ENCODE measurements at regions of chr17 and their contacts with region 1.

Region 1: DNA sequence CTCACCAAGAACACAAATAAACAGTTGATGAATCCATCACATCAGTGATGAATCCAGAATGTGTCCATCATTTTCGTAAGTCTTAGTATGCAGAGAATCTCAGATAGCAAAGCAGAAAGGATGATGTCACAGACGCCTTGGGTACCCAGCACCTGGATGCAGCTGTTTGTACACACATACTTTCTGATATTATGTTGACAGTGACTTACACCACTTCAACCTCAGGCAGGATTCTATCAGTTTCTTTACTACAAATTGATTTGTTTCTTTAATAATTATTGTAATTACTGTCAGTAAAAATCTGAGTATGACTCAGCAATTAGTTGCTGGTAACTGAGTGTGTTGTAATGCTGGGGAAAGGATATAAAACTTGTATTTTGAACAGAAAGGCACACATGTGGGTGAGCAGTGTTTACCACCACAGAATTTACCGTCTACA is 159.8 kb downstream of the RPTOR start:
- DNase-seq: no peak
- H3K4me3 ChIP-seq: no peak overlapping the region
- H3K27ac ChIP-seq: no peak overlapping the region
- H3K4me1 ChIP-seq: peaks cover 5% of the 10 kb centered on the region
- H3K27me3 ChIP-seq: no peaks in the 10 kb centered on the region
- CTCF ChIP-seq: no peak

Region 2: DNA sequence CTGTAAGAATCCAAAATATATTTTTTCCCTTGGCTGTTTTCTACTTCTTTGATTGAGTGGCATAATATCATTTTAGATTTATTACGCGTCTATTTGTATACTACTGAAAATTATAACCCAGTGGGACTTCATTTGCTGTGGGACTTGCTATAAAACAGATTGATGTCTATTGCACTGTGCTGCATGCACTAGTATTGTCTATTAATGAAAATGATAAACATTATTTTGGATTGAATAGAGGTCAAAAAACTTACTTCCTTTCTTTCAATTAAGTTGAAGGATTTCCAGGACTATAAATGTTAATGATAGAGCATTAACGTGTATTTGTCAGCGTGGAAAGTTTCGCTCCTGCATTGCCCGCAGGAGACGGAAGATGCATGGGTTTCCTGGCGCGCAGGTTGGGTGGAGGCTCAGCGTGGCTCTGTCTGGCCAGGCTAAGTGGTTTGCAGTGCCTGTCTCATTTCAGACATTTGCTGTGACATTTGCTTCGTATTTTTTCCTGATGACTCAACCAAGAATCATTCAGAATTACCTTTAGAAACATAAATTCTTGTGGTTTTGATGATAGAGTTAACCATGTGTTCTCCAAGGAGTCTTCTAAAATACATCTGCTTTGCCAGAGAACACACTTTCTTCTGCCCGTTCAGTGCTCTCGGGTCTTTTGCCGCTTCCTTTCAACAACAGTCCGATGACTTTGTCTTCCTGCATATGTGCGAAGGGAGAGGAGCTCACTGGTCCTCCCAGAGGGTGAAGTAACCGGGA is 56.9 kb after region 1 on chr17:
- CTCF ChIA-PET with region 1: no interaction called
- dilution Hi-C with region 1: loop called (anchors 5 kb)
- in situ Hi-C with region 1: no loop called
- intact Hi-C with region 1: no loop called
- DNase-seq: peak; percentile 75
- H3K4me3 ChIP-seq: no peak overlapping the region
- H3K27ac ChIP-seq: peak overlapping the region; percentile 2
- H3K4me1 ChIP-seq: peaks cover 17% of the 10 kb centered on the region
- H3K27me3 ChIP-seq: no peaks in the 10 kb centered on the region
- CTCF ChIP-seq: no peak